Pancreas (tissue), 10 donors: ENCODE measurements at regions of chr22 and their contacts with region 1.

Region 1: GRCh38 chr22:45994491-45995404 is 17.8 kb upstream of the WNT7B start:
- DNase-seq: peak; percentile 67 to 99 (median 90)
- ATAC-seq: peak; percentile 76 to 81 (median 76)
- H3K4me3 ChIP-seq: no peak overlapping the region
- H3K27ac ChIP-seq: no peak overlapping the region
- H3K4me1 ChIP-seq: peaks cover 0 to 5% (median 0%) of the 10 kb centered on the region in 3 donors
- H3K27me3 ChIP-seq: no peaks in the 10 kb centered on the region
- CTCF ChIP-seq: peak; percentile 96 to 99 (median 98)

Region 2: DNA sequence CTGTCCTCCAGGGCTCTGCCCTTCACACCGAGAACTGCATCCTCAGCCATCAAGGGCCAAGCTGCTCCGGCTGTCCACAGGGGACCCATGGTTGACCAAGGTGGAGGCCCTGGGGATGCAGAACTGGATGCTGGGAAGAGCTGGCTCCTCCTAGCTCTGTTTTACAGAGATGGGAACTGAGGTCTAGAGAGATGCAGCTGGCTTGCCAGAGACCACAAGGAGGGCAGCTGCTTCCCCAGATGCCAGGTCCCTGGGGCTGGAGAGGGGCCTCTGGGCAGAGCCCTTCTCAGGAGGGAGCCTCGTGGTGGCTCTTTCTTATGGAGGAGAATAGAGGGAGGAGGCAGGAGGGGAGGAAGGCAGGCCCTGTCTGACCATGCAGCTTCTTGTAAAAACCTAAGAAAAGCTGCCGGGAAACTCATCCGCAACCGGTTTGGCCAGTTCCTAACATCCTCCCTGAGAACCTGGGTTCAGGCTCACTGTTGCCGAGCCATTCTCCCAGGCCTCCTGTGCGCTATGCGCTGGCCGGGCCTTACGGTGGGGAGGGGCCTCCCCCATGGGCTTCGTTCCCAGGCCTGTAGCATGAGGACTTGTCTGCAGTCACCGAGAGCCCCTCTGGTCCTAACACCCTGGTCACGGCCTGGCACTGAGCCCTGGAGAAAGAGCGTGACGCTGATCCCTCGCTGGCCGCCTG is 98.3 kb before region 1 on chr22:
- intact Hi-C with region 1: no loop called
- DNase-seq: peak in 3 of 6 donors; percentile 43 to 45 (median 45)
- ATAC-seq: peak; percentile 64 to 89 (median 68)
- H3K4me3 ChIP-seq: no peak overlapping the region
- H3K27ac ChIP-seq: peak overlapping the region in 2 of 4 donors; percentile 31 to 41
- H3K4me1 ChIP-seq: no peaks in the 10 kb centered on the region
- H3K27me3 ChIP-seq: no peaks in the 10 kb centered on the region
- CTCF ChIP-seq: no peak

Region 3: GRCh38 chr22:46309526-46310085 is 314.9 kb after region 1 on chr22:
- intact Hi-C with region 1: loop called in 2 of 3 experiments (anchors 2 to 10 kb)
- DNase-seq: peak in 1 of 6 donors; percentile 37
- ATAC-seq: no peak
- H3K4me3 ChIP-seq: no peak overlapping the region
- H3K27ac ChIP-seq: no peak overlapping the region
- H3K4me1 ChIP-seq: no peaks in the 10 kb centered on the region
- H3K27me3 ChIP-seq: no peaks in the 10 kb centered on the region
- CTCF ChIP-seq: no peak

Region 4: GRCh38 chr22:46320166-46320710 is 325.5 kb after region 1 on chr22:
- intact Hi-C with region 1: loop called in 2 of 3 experiments (anchors 2 to 10 kb)
- DNase-seq: peak in 2 of 6 donors; percentile 3 to 37
- ATAC-seq: no peak
- H3K4me3 ChIP-seq: no peak overlapping the region
- H3K27ac ChIP-seq: no peak overlapping the region
- H3K4me1 ChIP-seq: no peaks in the 10 kb centered on the region
- H3K27me3 ChIP-seq: no peaks in the 10 kb centered on the region
- CTCF ChIP-seq: no peak